ENCODE measurements at regions of chr1 and their contacts with region 1.

Region 1: DNA sequence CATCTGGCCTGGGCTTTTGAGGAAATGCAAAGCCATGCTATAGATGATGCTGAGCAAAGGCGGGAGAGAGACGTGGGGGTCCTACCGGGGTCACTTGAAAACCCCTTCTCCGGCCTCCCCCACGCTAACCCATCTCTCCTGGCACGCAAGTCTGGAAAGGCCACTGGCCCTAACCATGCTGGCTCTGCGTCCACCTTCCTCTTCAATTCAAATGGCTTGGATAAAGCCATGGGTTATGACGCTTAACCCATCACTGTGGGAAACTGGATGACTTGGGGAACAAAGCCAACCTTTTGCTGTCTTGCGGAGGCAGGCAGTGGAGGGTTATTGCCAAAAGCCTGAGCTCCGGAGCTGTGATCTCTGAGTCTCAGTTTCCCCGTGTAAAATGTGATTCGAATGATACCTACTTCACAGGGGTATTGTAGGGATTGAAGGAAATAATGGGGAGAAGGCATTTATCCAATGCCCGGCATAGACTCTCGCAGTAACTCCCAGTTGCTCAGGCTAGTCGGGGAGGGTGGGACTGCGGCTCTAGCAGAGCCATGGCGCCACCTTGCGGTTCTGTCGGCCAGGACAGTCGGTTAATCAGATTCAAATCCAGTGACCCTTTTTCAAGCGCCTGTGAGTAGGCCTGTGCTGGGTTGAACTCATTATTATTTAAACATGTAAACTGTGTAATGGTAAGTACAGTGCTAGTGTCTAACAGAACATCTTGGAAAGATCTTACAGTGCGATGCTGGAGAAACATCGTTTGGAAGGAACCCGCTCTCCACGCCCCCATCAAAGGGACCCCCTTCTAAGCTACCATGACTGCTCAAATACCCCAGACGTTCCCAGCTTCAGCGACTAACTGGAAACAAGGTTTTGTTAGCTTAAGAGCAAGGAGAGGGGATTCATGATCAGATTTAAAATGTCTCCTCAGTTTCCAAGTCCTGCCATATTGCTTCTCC is 20.3 kb downstream of the NEK2 start:
- DNase-seq: peak; percentile 87 to 92
- ATAC-seq: peak; percentile 91 to 99 (median 94)
- H3K4me3 ChIP-seq: no peak overlapping the region
- H3K27ac ChIP-seq: no peak overlapping the region
- H3K4me1 ChIP-seq: no peaks in the 10 kb centered on the region
- H3K27me3 ChIP-seq: peaks cover 0 to 2% (median 0%) of the 10 kb centered on the region in 3 donors
- CTCF ChIP-seq: peak; percentile 95

Region 2: GRCh38 chr1:210584439-210585113 is 1070.5 kb before region 1 on chr1:
- intact Hi-C with region 1: loop called in 1 of 2 experiments (anchors 10 kb)
- DNase-seq: peak; percentile 71 to 86
- ATAC-seq: peak; percentile 43 to 89 (median 70)
- H3K4me3 ChIP-seq: no peak overlapping the region
- H3K27ac ChIP-seq: no peak overlapping the region
- H3K4me1 ChIP-seq: no peaks in the 10 kb centered on the region
- H3K27me3 ChIP-seq: no peaks in the 10 kb centered on the region
- CTCF ChIP-seq: peak; percentile 43

Region 3: DNA sequence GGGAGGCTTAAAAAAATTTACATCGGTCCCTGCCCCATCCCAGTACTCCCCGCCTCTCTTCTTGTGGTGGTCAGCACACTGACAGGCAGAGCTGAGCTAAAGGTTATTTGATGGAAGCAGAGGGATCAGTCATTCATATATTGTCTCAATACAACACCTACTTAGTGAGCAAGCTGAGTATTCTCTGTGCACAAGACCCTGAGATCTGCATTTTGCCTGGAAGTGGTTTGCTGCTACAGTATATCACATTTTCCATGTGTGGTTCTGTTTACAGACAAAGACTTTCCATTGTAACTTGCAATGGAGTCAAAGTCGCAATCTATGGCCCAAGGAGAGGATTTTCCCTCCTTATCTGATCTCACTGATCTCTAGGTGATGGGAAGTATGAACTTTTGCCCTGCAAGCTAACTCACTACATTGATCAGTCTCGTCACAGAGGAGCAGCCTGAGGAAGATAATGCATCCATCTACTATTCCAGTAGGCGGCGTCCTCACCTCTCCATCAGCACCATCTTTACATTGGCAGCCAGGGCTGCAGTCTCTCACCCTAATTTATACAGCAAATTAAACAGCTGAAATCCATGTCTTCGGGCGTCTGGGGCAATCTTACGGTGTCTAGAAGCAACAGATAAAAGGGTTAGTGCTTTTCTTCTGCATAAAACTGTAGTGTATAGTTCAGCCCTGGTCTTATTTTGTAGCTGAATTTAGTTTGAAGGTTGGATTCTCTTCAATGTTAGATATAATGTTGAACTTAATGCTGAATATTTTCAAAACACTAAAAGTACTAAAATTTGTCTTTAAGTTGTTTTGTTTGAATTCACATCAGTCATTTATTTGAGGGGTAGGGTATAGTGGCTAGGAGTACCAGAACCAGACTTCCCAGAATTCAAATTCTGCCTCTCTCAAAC is 331.7 kb before region 1 on chr1:
- intact Hi-C with region 1: loop called in 1 of 2 experiments (anchors 10 kb)
- DNase-seq: no peak
- ATAC-seq: peak in 2 of 4 donors; percentile 41 to 57
- H3K4me3 ChIP-seq: no peak overlapping the region
- H3K27ac ChIP-seq: no peak overlapping the region
- H3K4me1 ChIP-seq: peaks cover 3% of the 10 kb centered on the region
- H3K27me3 ChIP-seq: no peaks in the 10 kb centered on the region
- CTCF ChIP-seq: peak; percentile 57

Region 4: GRCh38 chr1:211476200-211476849 is 178.8 kb before region 1 on chr1:
- intact Hi-C with region 1: loop called in 1 of 2 experiments (anchors 1 kb)
- DNase-seq: peak; percentile 56 to 67
- ATAC-seq: peak in 2 of 4 donors; percentile 64 to 65
- H3K4me3 ChIP-seq: no peak overlapping the region
- H3K27ac ChIP-seq: no peak overlapping the region
- H3K4me1 ChIP-seq: no peaks in the 10 kb centered on the region
- H3K27me3 ChIP-seq: peaks cover 0 to 17% (median 3%) of the 10 kb centered on the region in 3 donors
- CTCF ChIP-seq: peak; percentile 70

Region 5: GRCh38 chr1:211514030-211514754 is 140.9 kb before region 1 on chr1:
- intact Hi-C with region 1: loop called (anchors 2 to 5 kb)
- DNase-seq: peak; percentile 74 to 84
- ATAC-seq: peak; percentile 82 to 92 (median 84)
- H3K4me3 ChIP-seq: no peak overlapping the region
- H3K27ac ChIP-seq: no peak overlapping the region
- H3K4me1 ChIP-seq: no peaks in the 10 kb centered on the region
- H3K27me3 ChIP-seq: peaks cover 0 to 11% (median 0%) of the 10 kb centered on the region in 3 donors
- CTCF ChIP-seq: peak; percentile 66

Region 6: DNA sequence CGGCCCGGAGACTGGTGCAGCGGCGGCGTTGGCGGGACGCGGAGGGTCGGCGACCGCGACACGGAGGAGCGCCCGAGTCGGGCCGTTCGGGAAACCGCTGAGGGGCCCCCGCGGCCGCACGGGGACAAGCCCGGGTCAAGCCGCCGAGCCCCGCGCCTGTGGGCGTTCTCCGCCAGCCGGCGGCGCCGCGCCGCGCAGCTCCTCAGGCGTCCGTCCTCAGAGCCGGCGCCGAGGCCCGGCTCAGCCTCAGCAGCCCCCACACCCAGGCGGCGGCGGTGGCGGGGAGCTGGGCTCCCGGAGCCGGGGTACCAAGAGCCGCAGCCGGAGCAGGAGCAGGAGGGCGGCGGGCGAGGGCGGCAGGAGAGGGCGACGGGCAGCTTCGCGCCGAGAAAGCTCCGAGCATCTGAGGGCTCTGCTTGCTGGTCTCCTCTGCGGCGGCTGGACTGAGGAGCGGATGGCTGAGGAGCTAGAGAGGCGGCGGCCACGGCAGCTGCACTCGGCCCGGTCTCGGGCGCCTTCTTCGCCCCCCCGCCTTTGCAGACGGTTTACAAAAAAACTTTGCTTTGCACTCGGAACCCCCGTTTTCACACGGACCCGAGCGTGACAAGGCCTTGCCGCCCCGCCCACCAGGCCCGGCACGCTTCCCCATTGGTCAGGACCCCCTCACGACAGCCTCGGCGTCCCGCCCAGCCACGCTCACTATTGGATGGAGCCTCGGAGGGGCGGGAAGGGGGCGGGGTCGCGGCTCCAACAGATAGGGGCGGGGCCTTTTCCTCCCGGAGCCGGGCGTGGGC is 76.3 kb before region 1 on chr1 and contains the start of gene SLC30A1:
- intact Hi-C with region 1: loop called (anchors 1 to 5 kb)
- DNase-seq: peak; percentile 99 to 100
- ATAC-seq: peak; percentile 97 to 99 (median 98)
- H3K4me3 ChIP-seq: peak within 1 kb of the TSS; percentile 97
- H3K27ac ChIP-seq: peak within 1 kb of the TSS; percentile 83
- H3K4me1 ChIP-seq: peaks cover 19% of the 10 kb centered on the region
- H3K27me3 ChIP-seq: no peaks in the 10 kb centered on the region
- CTCF ChIP-seq: no peak
- total RNA-seq, gene SLC30A1: 1.5 to 5.2 (median 3.0) TPM

Region 7: DNA sequence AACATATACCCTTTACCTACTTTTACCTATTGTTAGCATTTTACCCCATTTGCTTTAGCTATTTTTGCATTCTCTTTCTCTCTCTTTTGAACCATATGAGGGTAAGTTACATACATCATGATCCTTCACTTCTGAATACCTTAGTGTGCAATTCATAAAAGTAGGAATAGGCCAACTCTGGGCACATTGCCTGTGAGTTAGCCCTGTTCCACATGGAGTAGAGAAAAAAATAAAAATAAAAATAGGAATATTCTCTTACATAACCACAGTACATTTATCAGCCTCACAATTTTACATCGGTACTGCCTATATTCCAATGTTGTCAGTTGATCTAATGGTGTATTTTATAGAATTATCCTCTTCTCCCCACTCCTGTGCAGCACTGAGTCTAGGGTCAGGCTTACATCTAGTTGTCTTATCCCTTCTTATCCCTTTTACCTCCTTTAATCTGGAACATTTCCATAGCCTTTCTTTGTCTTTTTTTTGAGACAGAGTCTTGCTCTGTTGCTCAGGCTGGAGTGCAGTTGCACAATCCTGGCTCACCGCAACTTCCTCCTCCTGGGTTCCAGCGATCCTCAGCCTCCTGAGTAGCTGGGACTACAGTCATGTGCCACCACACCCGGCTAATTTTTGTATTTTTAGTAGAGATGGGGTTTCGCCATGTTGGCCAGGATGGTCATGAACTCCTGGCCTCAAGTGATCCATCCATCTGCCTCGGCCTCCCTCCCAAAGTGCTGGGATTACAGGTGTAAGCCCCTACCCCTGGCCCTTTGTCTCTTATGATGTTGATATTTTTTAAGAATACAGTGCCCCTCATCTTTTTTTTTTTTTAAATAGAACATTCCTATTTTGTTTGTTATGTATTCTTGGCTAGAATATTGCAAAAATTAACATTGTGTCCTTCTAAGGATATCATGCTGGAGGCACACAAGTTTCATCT is 65.1 kb before region 1 on chr1:
- intact Hi-C with region 1: no loop called
- DNase-seq: peak; percentile 79 to 82
- ATAC-seq: peak in 3 of 4 donors; percentile 53 to 59 (median 56)
- H3K4me3 ChIP-seq: no peak overlapping the region
- H3K27ac ChIP-seq: no peak overlapping the region
- H3K4me1 ChIP-seq: no peaks in the 10 kb centered on the region
- H3K27me3 ChIP-seq: no peaks in the 10 kb centered on the region
- CTCF ChIP-seq: no peak

Region 8: GRCh38 chr1:211603191-211603701 is 51.9 kb before region 1 on chr1:
- intact Hi-C with region 1: no loop called
- DNase-seq: no peak
- ATAC-seq: no peak
- H3K4me3 ChIP-seq: no peak overlapping the region
- H3K27ac ChIP-seq: no peak overlapping the region
- H3K4me1 ChIP-seq: no peaks in the 10 kb centered on the region
- H3K27me3 ChIP-seq: no peaks in the 10 kb centered on the region
- CTCF ChIP-seq: no peak

Region 9: DNA sequence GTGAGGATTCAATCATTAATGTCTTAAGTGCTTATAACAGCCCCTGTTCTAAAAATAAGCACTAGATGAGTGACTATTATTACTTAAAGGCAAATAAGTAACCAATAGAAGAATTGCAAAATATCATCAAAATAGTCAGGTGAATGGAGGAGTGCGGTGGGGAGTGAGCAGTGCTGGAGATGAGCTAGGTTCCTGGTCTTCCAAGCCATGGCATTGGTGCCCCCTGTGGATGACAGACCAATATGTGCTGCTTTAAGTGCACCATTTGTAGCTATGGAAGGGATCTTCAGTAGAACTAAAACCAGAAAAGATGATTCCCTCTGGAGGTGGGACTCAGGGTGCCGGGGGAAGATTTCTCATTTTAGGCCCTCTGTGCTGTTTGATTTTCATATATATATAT is 30.1 kb before region 1 on chr1:
- intact Hi-C with region 1: no loop called
- DNase-seq: no peak
- ATAC-seq: no peak
- H3K4me3 ChIP-seq: no peak overlapping the region
- H3K27ac ChIP-seq: no peak overlapping the region
- H3K4me1 ChIP-seq: no peaks in the 10 kb centered on the region
- H3K27me3 ChIP-seq: no peaks in the 10 kb centered on the region
- CTCF ChIP-seq: peak; percentile 6